Motor neuron (in vitro differentiated cells): ENCODE measurements at regions of chr7 and their contacts with region 1.

Region 1: DNA sequence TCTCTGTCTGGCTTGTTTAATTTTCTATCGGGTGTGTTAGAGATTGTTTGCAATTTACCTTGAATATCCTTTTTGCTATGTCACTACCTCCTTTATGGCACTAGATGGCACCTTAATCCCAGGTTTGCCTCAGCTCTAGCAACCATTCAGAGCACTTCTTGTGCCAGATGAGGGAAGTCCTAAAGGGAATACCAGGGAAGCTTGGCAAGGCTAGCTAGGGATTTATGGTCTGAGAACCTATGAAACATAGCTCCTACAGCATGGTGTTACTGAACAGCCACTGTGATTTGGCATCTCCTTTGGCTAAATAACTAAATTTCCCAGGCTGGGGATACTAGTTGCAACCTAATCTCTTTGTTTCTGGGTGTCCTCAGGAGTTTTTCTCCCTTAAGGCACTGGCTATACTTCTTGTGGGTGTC is 69.0 kb upstream of the VOPP1 start:
- ATAC-seq: peak; percentile 67 to 99 (median 90)
- H3K4me3 ChIP-seq: no peak overlapping the region
- H3K27ac ChIP-seq: no peak overlapping the region
- H3K4me1 ChIP-seq: no peaks in the 10 kb centered on the region

Region 2: DNA sequence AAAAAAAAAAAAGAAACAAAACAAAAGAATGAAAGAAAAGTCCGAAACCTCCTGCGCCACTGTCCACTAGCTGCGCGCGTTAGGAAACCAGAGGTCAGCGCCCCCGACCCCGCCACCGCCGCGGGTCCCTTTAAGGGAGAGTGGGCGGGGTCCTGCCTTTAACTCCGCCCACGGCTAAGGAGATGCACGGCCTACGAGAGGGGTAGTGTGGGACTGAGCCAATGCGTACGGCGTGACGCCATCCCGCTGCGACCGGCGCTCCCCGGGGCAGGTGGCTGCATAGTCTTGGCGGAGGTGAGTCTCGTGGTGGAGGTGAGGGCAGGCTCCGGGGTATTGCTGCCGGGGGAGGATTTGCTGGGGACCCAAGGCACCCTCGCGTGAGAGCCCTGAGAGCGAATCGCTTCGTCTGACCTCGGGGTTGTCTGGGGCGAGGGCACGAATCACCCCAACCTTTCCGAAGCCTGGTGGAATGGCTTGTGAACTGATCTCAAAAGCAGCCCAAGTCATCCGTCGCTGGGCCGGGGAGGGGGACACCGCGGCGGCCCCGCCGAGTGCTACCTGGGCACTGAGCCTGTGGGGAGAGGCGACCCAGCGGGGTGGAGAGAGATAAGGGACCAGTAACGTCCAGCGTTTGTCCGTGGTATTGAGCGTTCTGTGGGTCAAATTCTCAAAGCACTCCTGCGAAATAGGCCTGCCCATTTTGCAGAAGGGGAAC is 310.5 kb after region 1 on chr7 and contains the start of gene MRPS17:
- in situ Hi-C with region 1: loop called in 2 of 9 experiments (anchors 25 kb)
- ATAC-seq: peak; percentile 99 to 100 (median 100)
- H3K4me3 ChIP-seq: peak within 1 kb of the TSS; percentile 67 to 91 (median 84)
- H3K27ac ChIP-seq: peak within 1 kb of the TSS; percentile 65 to 78
- H3K4me1 ChIP-seq: peaks cover 0 to 6% of the 10 kb centered on the region in 2 donors
- total RNA-seq, gene MRPS17: 11.8 to 24.6 (median 17.1) TPM

Region 3: GRCh38 chr7:56063882-56064625 is 422.8 kb after region 1 on chr7 and contains the start of gene SUMF2:
- in situ Hi-C with region 1: loop called in 1 of 9 experiments (anchors 25 kb)
- ATAC-seq: peak; percentile 85 to 97 (median 96)
- H3K4me3 ChIP-seq: peak within 1 kb of the TSS; percentile 59 to 94 (median 62)
- H3K27ac ChIP-seq: peak within 1 kb of the TSS; percentile 70 to 83
- H3K4me1 ChIP-seq: peaks cover 3 to 5% of the 10 kb centered on the region in 2 donors
- total RNA-seq, gene SUMF2: 51.6 to 164 (median 92.3) TPM

Region 4: GRCh38 chr7:56092789-56093531 is 451.7 kb after region 1 on chr7 and contains the start of gene PHKG1:
- in situ Hi-C with region 1: loop called in 1 of 9 experiments (anchors 25 kb)
- ATAC-seq: peak in 4 of 8 experiments; percentile 43 to 88 (median 84)
- H3K4me3 ChIP-seq: no peak within 1 kb of the TSS
- H3K27ac ChIP-seq: no peak within 1 kb of the TSS
- H3K4me1 ChIP-seq: no peaks in the 10 kb centered on the region
- total RNA-seq, gene PHKG1: 0.42 to 3.9 (median 1.2) TPM